Naive thymus-derived CD4-positive, alpha-beta T cell (primary cell): ENCODE measurements at regions of chr1 and their contacts with region 1.

Region 1: GRCh38 chr1:6423321-6423999 is 1.1 kb upstream of the ESPN start:
- DNase-seq: peak; percentile 45 to 75 (median 66)
- ATAC-seq: peak; percentile 84
- H3K4me3 ChIP-seq: peak overlapping the region; percentile 15
- H3K4me3 Mint-ChIP-seq: peak overlapping the region; percentile 54 to 83 (median 72)
- H3K27ac ChIP-seq: no peak overlapping the region
- H3K27ac Mint-ChIP-seq: no peak overlapping the region
- H3K4me1 ChIP-seq: peaks cover 13 to 31% of the 10 kb centered on the region in 2 donors
- H3K4me1 Mint-ChIP-seq: peaks cover 0 to 14% (median 11%) of the 10 kb centered on the region in 7 donors
- H3K27me3 ChIP-seq: peaks cover 0 to 8% of the 10 kb centered on the region in 2 donors
- H3K27me3 Mint-ChIP-seq: peaks cover 18 to 60% (median 26%) of the 10 kb centered on the region in 5 donors

Region 2: GRCh38 chr1:6208723-6209660 is 214.5 kb before region 1 on chr1:
- CTCF ChIA-PET with region 1: no interaction called
- POLR2A ChIA-PET with region 1: no interaction called
- intact Hi-C with region 1: no loop called
- DNase-seq: peak in 2 of 9 donors; percentile 20 to 47
- ATAC-seq: peak; percentile 65
- H3K4me3 ChIP-seq: peak overlapping the region; percentile 27
- H3K4me3 Mint-ChIP-seq: peak overlapping the region in 8 of 10 donors; percentile 14 to 78 (median 56)
- H3K27ac ChIP-seq: no peak overlapping the region
- H3K27ac Mint-ChIP-seq: peak overlapping the region in 1 of 9 donors; percentile 25
- H3K4me1 ChIP-seq: peaks cover 0 to 5% of the 10 kb centered on the region in 2 donors
- H3K4me1 Mint-ChIP-seq: peaks cover 0 to 21% (median 7%) of the 10 kb centered on the region in 7 donors
- H3K27me3 ChIP-seq: peaks cover 0 to 8% of the 10 kb centered on the region in 2 donors
- H3K27me3 Mint-ChIP-seq: peaks cover 0 to 23% (median 6%) of the 10 kb centered on the region in 5 donors

Region 3: GRCh38 chr1:6317098-6317760 is 106.2 kb before region 1 on chr1:
- CTCF ChIA-PET with region 1: no interaction called
- POLR2A ChIA-PET with region 1: no interaction called
- intact Hi-C with region 1: no loop called
- DNase-seq: no peak
- ATAC-seq: no peak
- H3K4me3 ChIP-seq: no peak overlapping the region
- H3K4me3 Mint-ChIP-seq: no peak overlapping the region
- H3K27ac ChIP-seq: no peak overlapping the region
- H3K27ac Mint-ChIP-seq: no peak overlapping the region
- H3K4me1 ChIP-seq: no peaks in the 10 kb centered on the region
- H3K4me1 Mint-ChIP-seq: peaks cover 0 to 3% (median 0%) of the 10 kb centered on the region in 7 donors
- H3K27me3 ChIP-seq: no peaks in the 10 kb centered on the region
- H3K27me3 Mint-ChIP-seq: no peaks in the 10 kb centered on the region

Region 4: GRCh38 chr1:6438047-6438525 is 14.6 kb after region 1 on chr1:
- CTCF ChIA-PET with region 1: interaction called, 44 read pairs
- POLR2A ChIA-PET with region 1: interaction called, 3 read pairs
- intact Hi-C with region 1: loop called (anchors 1 kb)
- DNase-seq: peak; percentile 55 to 79 (median 66)
- ATAC-seq: peak; percentile 74
- H3K4me3 ChIP-seq: no peak overlapping the region
- H3K4me3 Mint-ChIP-seq: peak overlapping the region in 4 of 10 donors; percentile 4 to 58 (median 22)
- H3K27ac ChIP-seq: no peak overlapping the region
- H3K27ac Mint-ChIP-seq: peak overlapping the region in 3 of 9 donors; percentile 38 to 74 (median 67)
- H3K4me1 ChIP-seq: no peaks in the 10 kb centered on the region
- H3K4me1 Mint-ChIP-seq: peaks cover 0 to 14% (median 9%) of the 10 kb centered on the region in 7 donors
- H3K27me3 ChIP-seq: peaks cover 0 to 9% of the 10 kb centered on the region in 2 donors
- H3K27me3 Mint-ChIP-seq: peaks cover 18 to 48% (median 20%) of the 10 kb centered on the region in 5 donors